Vagina (tissue), 2 donors: ENCODE measurements at regions of chr3 and their contacts with region 1.

Region 1: GRCh38 chr3:60979461-60980341 is 271.6 kb downstream of the FHIT start:
- DNase-seq: no peak
- H3K4me3 ChIP-seq: no peak overlapping the region
- H3K27ac ChIP-seq: no peak overlapping the region
- H3K4me1 ChIP-seq: no peaks in the 10 kb centered on the region
- H3K27me3 ChIP-seq: no peaks in the 10 kb centered on the region
- CTCF ChIP-seq: no peak
- POLR2A ChIP-seq: no peak

Region 2: DNA sequence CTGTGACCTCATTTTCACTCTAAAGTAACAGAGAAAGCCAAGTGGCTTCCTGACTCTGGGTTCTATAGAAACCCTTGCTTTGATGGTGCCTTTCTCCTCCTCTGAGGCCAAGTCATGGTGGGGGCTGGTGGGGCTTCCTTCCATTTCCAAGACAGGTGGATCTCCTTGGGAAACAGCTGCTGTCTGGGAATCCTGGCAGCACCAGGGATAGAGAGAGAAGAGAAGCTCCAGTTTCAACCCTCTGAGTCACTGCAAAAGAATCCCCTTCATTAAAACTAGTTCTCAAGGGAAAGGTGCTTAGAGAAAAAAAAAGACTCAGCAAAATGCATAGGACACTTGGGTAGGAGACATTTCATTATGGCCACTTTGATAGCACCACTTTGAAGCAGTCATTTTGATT is 342.9 kb before region 1 on chr3:
- intact Hi-C with region 1: no loop called
- DNase-seq: no peak
- H3K4me3 ChIP-seq: no peak overlapping the region
- H3K27ac ChIP-seq: no peak overlapping the region
- H3K4me1 ChIP-seq: no peaks in the 10 kb centered on the region
- H3K27me3 ChIP-seq: no peaks in the 10 kb centered on the region
- CTCF ChIP-seq: no peak
- POLR2A ChIP-seq: no peak

Region 3: GRCh38 chr3:61141697-61142096 is 162.0 kb after region 1 on chr3:
- intact Hi-C with region 1: no loop called
- DNase-seq: no peak
- H3K4me3 ChIP-seq: no peak overlapping the region
- H3K27ac ChIP-seq: no peak overlapping the region
- H3K4me1 ChIP-seq: no peaks in the 10 kb centered on the region
- H3K27me3 ChIP-seq: no peaks in the 10 kb centered on the region
- CTCF ChIP-seq: no peak
- POLR2A ChIP-seq: no peak

Region 4: GRCh38 chr3:62084597-62084996 is 1104.9 kb after region 1 on chr3:
- intact Hi-C with region 1: loop called (anchors 5 kb)
- DNase-seq: no peak
- H3K4me3 ChIP-seq: no peak overlapping the region
- H3K27ac ChIP-seq: no peak overlapping the region
- H3K4me1 ChIP-seq: no peaks in the 10 kb centered on the region
- H3K27me3 ChIP-seq: no peaks in the 10 kb centered on the region
- CTCF ChIP-seq: no peak
- POLR2A ChIP-seq: no peak